ENCODE measurements at regions of chr12 and their contacts with region 1.

Region 1: GRCh38 chr12:46468159-46468558 is 95.6 kb upstream of the SLC38A2 start:
- DNase-seq: peak; percentile 55 to 81
- ATAC-seq: peak; percentile 94 to 96 (median 96)
- H3K4me3 ChIP-seq: peak overlapping the region; percentile 4
- H3K27ac ChIP-seq: peak overlapping the region; percentile 74
- H3K4me1 ChIP-seq: peaks cover 53% of the 10 kb centered on the region
- H3K27me3 ChIP-seq: no peaks in the 10 kb centered on the region
- CTCF ChIP-seq: peak; percentile 21

Region 2: DNA sequence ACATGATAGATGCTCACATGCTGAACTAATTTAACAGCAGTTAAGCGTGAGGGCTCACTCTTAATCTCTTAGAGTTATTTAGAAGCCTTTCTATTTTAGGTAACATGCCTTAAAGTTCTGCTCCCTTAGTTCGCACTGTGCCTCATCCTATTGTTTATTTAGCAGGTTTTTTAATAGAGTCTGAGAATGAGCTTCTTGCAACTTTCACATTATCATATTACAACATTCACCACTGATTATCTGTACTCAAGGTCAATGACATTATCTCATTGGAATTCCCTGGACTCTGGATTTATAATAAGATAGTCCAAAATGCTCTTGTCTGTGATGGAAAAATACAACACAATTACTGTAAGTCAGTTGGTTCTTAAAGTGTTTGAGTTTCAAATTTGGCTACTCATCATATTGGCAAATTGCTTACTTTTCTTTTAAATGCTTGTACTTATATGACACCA is 88.0 kb after region 1 on chr12:
- intact Hi-C with region 1: loop called in 1 of 2 experiments (anchors 2 kb)
- DNase-seq: no peak
- ATAC-seq: peak; percentile 63 to 88 (median 80)
- H3K4me3 ChIP-seq: no peak overlapping the region
- H3K27ac ChIP-seq: peak overlapping the region; percentile 77
- H3K4me1 ChIP-seq: peaks cover 52% of the 10 kb centered on the region
- H3K27me3 ChIP-seq: no peaks in the 10 kb centered on the region
- CTCF ChIP-seq: no peak

Measured in psoas muscle (tissue), 8 donors.